Caco-2 (cell line): ENCODE measurements at regions of chr13 and their contacts with region 1.

Region 1: DNA sequence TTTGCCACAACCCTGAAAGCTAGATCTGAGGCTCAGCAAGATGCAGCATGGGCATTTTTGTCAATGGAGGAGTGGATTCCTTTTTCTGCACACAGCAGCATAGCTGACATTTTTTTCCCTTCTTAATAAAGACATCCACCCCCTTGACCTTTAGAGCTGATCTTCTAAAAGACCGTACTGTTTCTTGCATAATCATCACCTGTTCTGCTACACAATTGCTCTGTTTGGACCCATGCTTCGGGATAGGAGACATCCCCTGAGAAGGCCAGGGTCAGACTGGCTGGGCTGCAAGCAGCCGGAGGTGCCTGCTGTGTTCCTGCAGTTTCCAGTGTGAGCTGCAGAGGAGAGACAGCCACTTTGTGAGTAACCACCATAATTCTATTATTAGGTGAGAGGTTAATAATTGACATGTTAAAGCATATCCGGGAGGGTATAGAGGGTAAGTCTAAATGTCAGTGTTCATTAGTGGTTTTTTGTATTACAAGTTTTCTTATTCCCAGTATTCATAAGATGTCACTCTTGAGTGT is 108.5 kb upstream of the C1QTNF9B start:
- DNase-seq: peak; percentile 61 to 64
- H3K4me3 ChIP-seq: no peak overlapping the region
- H3K4me3 Mint-ChIP-seq: peak overlapping the region; percentile 65
- H3K27ac Mint-ChIP-seq: peak overlapping the region; percentile 89
- H3K4me1 ChIP-seq: peaks cover 67% of the 10 kb centered on the region
- H3K4me1 Mint-ChIP-seq: peaks cover 63% of the 10 kb centered on the region
- H3K27me3 ChIP-seq: no peaks in the 10 kb centered on the region
- H3K27me3 Mint-ChIP-seq: no peaks in the 10 kb centered on the region
- CTCF ChIP-seq: no peak

Region 2: DNA sequence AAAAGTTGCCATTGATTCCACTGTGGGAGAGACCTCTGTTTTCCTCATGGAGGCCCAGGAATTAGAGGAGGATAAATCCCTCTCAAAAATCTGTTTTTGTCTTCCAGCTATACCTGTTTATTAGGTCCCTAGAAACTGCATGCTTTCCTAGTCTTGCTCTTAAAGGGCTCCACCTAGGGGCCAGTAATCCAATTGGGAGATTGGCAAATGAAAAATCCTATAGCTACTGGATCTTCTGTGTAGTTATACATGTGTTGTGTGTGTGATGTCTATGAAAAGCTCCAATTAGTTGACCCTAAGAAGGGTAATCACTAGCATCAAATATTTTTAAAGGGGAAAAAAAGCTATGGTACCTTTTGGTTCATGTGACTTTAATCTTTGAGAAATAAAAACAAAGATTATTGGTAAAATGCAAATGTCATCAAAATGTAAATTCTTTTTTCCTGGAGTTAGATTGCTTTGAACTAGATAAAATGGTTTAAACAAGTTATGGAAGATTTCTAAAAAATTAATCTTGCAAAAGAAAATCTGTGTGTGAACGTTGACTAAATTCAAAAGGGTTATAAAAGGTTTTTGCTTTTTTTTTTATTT is 45.2 kb before region 1 on chr13:
- CTCF ChIA-PET with region 1: interaction called, 12 read pairs
- POLR2A ChIA-PET with region 1: interaction called, 3 read pairs
- intact Hi-C with region 1: no loop called
- DNase-seq: peak in 1 of 2 experiments; percentile 70
- H3K4me3 ChIP-seq: no peak overlapping the region
- H3K4me3 Mint-ChIP-seq: no peak overlapping the region
- H3K27ac Mint-ChIP-seq: no peak overlapping the region
- H3K4me1 ChIP-seq: peaks cover 4% of the 10 kb centered on the region; the same call in 1 of the 2 replicates
- H3K4me1 Mint-ChIP-seq: peaks cover 6% of the 10 kb centered on the region
- H3K27me3 ChIP-seq: no peaks in the 10 kb centered on the region
- H3K27me3 Mint-ChIP-seq: no peaks in the 10 kb centered on the region
- CTCF ChIP-seq: peak; percentile 71 to 88

Region 3: DNA sequence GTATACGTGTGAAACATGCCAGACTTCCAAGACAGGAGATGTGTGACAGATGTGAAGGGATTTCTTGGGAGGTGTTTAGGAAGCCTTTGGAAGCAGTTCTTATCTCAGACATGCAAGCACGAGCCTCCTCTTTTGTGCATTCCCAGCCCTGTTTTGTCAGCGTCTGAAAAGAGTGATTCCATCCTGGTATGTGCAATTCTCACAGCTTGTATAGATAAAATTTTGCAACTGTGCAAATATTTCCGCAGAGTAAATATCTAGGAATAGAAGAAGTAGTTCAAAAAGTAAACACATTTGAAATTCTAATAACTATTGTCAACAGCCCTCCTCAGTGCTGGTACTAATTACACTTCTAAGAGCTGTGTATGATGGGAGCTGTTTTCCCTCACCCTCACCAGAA is 36.2 kb before region 1 on chr13:
- CTCF ChIA-PET with region 1: no interaction called
- POLR2A ChIA-PET with region 1: no interaction called
- intact Hi-C with region 1: loop called (anchors 1 kb)
- DNase-seq: peak; percentile 89 to 92
- H3K4me3 ChIP-seq: no peak overlapping the region
- H3K4me3 Mint-ChIP-seq: peak overlapping the region; percentile 46
- H3K27ac Mint-ChIP-seq: peak overlapping the region; percentile 69
- H3K4me1 ChIP-seq: peaks cover 31% of the 10 kb centered on the region
- H3K4me1 Mint-ChIP-seq: peaks cover 24% of the 10 kb centered on the region
- H3K27me3 ChIP-seq: no peaks in the 10 kb centered on the region
- H3K27me3 Mint-ChIP-seq: no peaks in the 10 kb centered on the region
- CTCF ChIP-seq: no peak

Region 4: DNA sequence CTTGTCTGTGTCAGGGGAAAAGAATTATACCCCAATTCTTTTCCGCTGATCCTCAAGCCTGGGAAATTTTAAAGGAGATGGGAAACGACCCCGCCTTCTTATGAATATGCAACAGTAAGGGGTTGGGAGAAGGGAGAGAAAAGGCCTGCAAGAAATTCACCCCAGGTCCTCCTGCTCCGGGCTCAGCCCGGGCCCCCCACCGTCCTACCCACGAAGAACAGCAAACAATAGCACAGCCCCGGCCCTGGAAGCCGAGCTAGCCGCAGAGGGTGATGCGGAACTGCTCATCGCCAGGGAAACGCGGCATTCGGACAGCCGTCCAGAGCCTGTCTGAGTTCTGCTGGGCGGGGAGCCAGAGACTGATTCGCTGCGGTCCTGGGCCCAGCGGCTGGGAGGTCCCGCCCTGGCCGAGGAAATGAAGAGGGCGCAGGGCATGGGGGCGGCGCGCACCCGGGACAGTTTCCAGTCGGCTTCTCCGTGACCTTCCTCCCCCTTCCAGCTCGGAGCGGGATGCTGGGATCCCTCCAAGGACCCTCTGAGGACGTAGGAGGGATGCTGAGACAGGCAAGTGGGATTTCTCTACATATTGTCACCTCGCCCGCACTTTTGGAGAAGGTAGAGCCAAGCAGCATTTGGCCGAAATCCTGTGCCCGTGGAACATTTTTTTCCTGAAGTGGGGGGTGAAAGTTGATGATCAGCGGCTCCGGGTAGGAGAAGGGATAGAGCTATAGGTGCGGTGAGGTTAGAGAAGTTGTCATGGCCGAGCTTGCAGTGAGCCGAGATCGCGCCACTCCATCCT is 26.3 kb before region 1 on chr13:
- CTCF ChIA-PET with region 1: no interaction called
- POLR2A ChIA-PET with region 1: no interaction called
- intact Hi-C with region 1: loop called (anchors 1 kb)
- DNase-seq: peak; percentile 67 to 75
- H3K4me3 ChIP-seq: peak overlapping the region; percentile 59
- H3K4me3 Mint-ChIP-seq: peak overlapping the region; percentile 91
- H3K27ac Mint-ChIP-seq: peak overlapping the region; percentile 88
- H3K4me1 ChIP-seq: no peaks in the 10 kb centered on the region
- H3K4me1 Mint-ChIP-seq: peaks cover 15% of the 10 kb centered on the region
- H3K27me3 ChIP-seq: no peaks in the 10 kb centered on the region
- H3K27me3 Mint-ChIP-seq: no peaks in the 10 kb centered on the region
- CTCF ChIP-seq: no peak

Region 5: GRCh38 chr13:23991119-23991518 is 14.7 kb before region 1 on chr13:
- CTCF ChIA-PET with region 1: no interaction called
- POLR2A ChIA-PET with region 1: no interaction called
- intact Hi-C with region 1: loop called (anchors 1 kb)
- DNase-seq: peak in 1 of 2 experiments; percentile 52
- H3K4me3 ChIP-seq: no peak overlapping the region
- H3K4me3 Mint-ChIP-seq: peak overlapping the region; percentile 18
- H3K27ac Mint-ChIP-seq: peak overlapping the region; percentile 37
- H3K4me1 ChIP-seq: peaks cover 37% of the 10 kb centered on the region
- H3K4me1 Mint-ChIP-seq: peaks cover 20% of the 10 kb centered on the region
- H3K27me3 ChIP-seq: no peaks in the 10 kb centered on the region
- H3K27me3 Mint-ChIP-seq: no peaks in the 10 kb centered on the region
- CTCF ChIP-seq: no peak

Region 6: DNA sequence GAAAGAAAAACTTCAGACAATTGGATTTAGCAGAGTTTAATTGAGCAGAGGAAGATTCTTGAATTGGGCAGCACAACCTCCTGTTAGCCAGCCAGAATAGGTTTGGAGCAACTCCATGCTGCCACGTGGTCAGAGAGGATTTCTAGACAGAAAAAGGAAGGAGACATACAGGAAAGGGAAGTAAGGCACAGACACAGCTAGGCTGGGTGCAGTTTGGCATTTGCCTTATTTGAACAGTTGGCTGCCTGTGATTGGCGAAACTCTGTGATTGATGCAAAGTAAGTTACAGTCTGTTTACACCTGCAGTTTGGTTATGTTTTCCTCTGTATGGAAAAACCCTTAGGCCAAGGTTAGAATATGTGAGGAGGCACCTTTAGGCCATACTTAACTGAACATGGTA is 68.9 kb after region 1 on chr13:
- CTCF ChIA-PET with region 1: no interaction called
- POLR2A ChIA-PET with region 1: no interaction called
- intact Hi-C with region 1: no loop called
- DNase-seq: no peak
- H3K4me3 ChIP-seq: no peak overlapping the region
- H3K4me3 Mint-ChIP-seq: no peak overlapping the region
- H3K27ac Mint-ChIP-seq: no peak overlapping the region
- H3K4me1 ChIP-seq: peaks cover 15% of the 10 kb centered on the region
- H3K4me1 Mint-ChIP-seq: peaks cover 9% of the 10 kb centered on the region
- H3K27me3 ChIP-seq: no peaks in the 10 kb centered on the region
- H3K27me3 Mint-ChIP-seq: no peaks in the 10 kb centered on the region
- CTCF ChIP-seq: no peak

Region 7: GRCh38 chr13:24615911-24616472 is 610.2 kb after region 1 on chr13:
- CTCF ChIA-PET with region 1: no interaction called
- POLR2A ChIA-PET with region 1: interaction called, 17 read pairs
- intact Hi-C with region 1: no loop called
- DNase-seq: no peak
- H3K4me3 ChIP-seq: no peak overlapping the region
- H3K4me3 Mint-ChIP-seq: no peak overlapping the region
- H3K27ac Mint-ChIP-seq: no peak overlapping the region
- H3K4me1 ChIP-seq: peaks cover 9% of the 10 kb centered on the region
- H3K4me1 Mint-ChIP-seq: peaks cover 6% of the 10 kb centered on the region
- H3K27me3 ChIP-seq: no peaks in the 10 kb centered on the region
- H3K27me3 Mint-ChIP-seq: no peaks in the 10 kb centered on the region
- CTCF ChIP-seq: no peak